ENCODE measurements at regions of chr9 and their contacts with region 1.

Region 1: GRCh38 chr9:110217656-110218099 is 9.7 kb upstream of the C9orf152 start:
- DNase-seq: peak; percentile 50
- H3K4me3 Mint-ChIP-seq: no peak overlapping the region
- H3K27ac Mint-ChIP-seq: no peak overlapping the region
- H3K4me1 Mint-ChIP-seq: peaks cover 11% of the 10 kb centered on the region
- H3K27me3 Mint-ChIP-seq: no peaks in the 10 kb centered on the region
- CTCF ChIP-seq: peak; percentile 47

Region 2: DNA sequence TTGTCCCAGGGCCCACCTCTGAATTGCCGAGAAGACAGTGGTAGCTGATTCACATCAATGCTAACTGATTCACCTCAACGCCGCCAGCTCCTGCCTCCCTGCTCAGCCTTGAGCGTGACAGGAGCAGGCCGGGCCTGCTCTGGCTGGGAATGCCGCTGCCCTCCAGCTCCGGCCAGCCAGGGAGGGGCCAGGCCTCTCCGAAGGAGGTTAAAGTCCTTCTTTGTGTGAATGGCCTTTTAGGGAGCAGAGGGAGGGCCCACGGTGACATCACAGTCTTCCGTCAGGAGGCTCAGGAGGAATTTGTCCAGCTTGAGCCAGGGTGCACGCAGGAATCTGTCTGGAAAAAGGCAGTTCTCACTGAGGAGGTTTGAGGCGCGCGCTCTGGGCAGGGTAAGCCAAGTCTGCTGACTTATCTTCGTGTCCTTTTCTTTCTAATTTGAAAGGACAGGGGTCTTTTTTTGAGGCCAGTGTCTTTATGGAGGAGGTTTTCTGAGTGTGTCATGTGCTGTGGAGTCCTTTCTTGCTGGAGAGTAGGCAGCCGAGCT is 92.4 kb before region 1 on chr9:
- CTCF ChIA-PET with region 1: no interaction called
- POLR2A ChIA-PET with region 1: no interaction called
- intact Hi-C with region 1: no loop called
- DNase-seq: peak; percentile 81
- H3K4me3 Mint-ChIP-seq: peak overlapping the region; percentile 55
- H3K27ac Mint-ChIP-seq: peak overlapping the region; percentile 89
- H3K4me1 Mint-ChIP-seq: peaks cover 49% of the 10 kb centered on the region
- H3K27me3 Mint-ChIP-seq: no peaks in the 10 kb centered on the region
- CTCF ChIP-seq: no peak

Region 3: GRCh38 chr9:110192531-110193261 is 25.0 kb before region 1 on chr9:
- CTCF ChIA-PET with region 1: interaction called, 276 read pairs
- POLR2A ChIA-PET with region 1: interaction called, 8 read pairs
- intact Hi-C with region 1: no loop called
- DNase-seq: no peak
- H3K4me3 Mint-ChIP-seq: no peak overlapping the region
- H3K27ac Mint-ChIP-seq: no peak overlapping the region
- H3K4me1 Mint-ChIP-seq: peaks cover 4% of the 10 kb centered on the region
- H3K27me3 Mint-ChIP-seq: no peaks in the 10 kb centered on the region
- CTCF ChIP-seq: no peak